ENCODE measurements at regions of chr2 and their contacts with region 1.

Region 1: GRCh38 chr2:226835796-226836547 is at the start of gene RHBDD1:
- DNase-seq: peak; percentile 93
- ATAC-seq: peak; percentile 86
- H3K4me3 Mint-ChIP-seq: peak within 1 kb of the TSS; percentile 90
- H3K27ac Mint-ChIP-seq: peak within 1 kb of the TSS; percentile 97
- H3K4me1 Mint-ChIP-seq: peaks cover 69% of the 10 kb centered on the region
- H3K27me3 Mint-ChIP-seq: no peaks in the 10 kb centered on the region
- CTCF ChIP-seq: no peak
- total RNA-seq, gene RHBDD1: 71.1 and 90.2 TPM in 2 replicates

Region 2: DNA sequence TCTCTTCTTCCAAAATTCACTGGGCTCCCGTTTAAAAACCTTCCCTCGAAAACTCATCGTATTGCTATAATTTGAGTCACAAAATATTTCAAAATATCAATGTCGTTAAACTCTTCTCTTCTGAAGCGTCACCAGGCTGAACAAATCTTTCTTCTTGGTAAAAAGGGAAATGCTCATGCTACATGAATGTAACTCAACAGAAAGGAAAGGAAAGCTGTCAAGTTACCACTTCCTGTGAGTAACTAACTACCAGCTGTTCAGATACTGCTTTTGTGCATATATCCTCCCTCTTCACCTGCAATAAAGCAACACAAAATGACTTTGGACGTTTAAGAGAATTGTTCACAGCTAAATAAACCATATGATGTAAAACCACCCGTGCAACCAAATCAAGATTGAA is 1889.1 kb before region 1 on chr2:
- CTCF ChIA-PET with region 1: no interaction called
- POLR2A ChIA-PET with region 1: no interaction called
- intact Hi-C with region 1: loop called (anchors 10 kb)
- DNase-seq: no peak
- ATAC-seq: peak; percentile 65
- H3K4me3 Mint-ChIP-seq: peak overlapping the region; percentile 90
- H3K27ac Mint-ChIP-seq: peak overlapping the region; percentile 92
- H3K4me1 Mint-ChIP-seq: peaks cover 87% of the 10 kb centered on the region
- H3K27me3 Mint-ChIP-seq: no peaks in the 10 kb centered on the region
- CTCF ChIP-seq: no peak

Region 3: DNA sequence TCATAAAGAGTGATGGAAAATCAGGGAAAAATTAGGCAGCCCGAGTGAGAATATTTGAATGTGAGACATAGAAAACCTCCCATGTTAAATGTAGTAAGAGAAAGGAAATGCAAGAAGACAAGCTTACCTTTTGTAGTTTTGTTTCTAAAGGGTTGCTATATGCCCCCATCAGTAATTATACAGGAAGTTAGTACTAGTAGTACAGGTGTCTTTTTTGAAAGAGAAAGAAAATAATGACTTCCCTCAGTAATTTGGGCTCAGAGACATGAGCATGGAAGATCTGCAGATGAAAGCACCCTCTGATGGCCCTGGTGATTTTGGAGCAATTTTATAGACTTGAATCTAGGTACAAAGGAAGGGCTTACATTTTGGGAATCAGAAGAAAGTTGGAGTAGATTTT is 80.7 kb after region 1 on chr2:
- CTCF ChIA-PET with region 1: no interaction called
- POLR2A ChIA-PET with region 1: interaction called, 10 read pairs
- intact Hi-C with region 1: no loop called
- DNase-seq: no peak
- ATAC-seq: peak; percentile 57
- H3K4me3 Mint-ChIP-seq: peak overlapping the region; percentile 52
- H3K27ac Mint-ChIP-seq: peak overlapping the region; percentile 89
- H3K4me1 Mint-ChIP-seq: peaks cover 59% of the 10 kb centered on the region
- H3K27me3 Mint-ChIP-seq: no peaks in the 10 kb centered on the region
- CTCF ChIP-seq: no peak

Region 4: DNA sequence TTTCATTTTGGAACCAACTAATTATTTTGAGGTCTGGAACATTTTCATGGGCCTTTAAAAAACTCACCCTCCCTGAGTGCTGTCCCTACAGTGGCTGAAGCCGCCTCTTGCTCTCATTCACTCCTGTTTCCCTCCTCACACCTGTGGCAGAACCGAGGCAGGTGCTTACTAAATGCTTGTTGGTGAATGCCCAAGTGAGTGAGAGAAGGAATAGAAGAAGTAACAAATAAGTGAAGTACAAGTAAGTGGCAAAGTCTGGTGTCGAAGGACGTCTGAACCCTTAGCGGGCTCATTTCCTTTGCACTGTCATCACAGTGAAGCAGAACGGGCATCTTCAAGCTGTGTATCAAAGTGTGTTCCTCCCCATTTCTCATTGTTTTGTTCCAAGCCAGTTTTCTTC is 135.1 kb after region 1 on chr2:
- CTCF ChIA-PET with region 1: no interaction called
- POLR2A ChIA-PET with region 1: interaction called, 17 read pairs
- intact Hi-C with region 1: loop called (anchors 1 kb)
- DNase-seq: no peak
- ATAC-seq: peak; percentile 77
- H3K4me3 Mint-ChIP-seq: peak overlapping the region; percentile 84
- H3K27ac Mint-ChIP-seq: peak overlapping the region; percentile 97
- H3K4me1 Mint-ChIP-seq: peaks cover 42% of the 10 kb centered on the region
- H3K27me3 Mint-ChIP-seq: no peaks in the 10 kb centered on the region
- CTCF ChIP-seq: no peak

Region 5: DNA sequence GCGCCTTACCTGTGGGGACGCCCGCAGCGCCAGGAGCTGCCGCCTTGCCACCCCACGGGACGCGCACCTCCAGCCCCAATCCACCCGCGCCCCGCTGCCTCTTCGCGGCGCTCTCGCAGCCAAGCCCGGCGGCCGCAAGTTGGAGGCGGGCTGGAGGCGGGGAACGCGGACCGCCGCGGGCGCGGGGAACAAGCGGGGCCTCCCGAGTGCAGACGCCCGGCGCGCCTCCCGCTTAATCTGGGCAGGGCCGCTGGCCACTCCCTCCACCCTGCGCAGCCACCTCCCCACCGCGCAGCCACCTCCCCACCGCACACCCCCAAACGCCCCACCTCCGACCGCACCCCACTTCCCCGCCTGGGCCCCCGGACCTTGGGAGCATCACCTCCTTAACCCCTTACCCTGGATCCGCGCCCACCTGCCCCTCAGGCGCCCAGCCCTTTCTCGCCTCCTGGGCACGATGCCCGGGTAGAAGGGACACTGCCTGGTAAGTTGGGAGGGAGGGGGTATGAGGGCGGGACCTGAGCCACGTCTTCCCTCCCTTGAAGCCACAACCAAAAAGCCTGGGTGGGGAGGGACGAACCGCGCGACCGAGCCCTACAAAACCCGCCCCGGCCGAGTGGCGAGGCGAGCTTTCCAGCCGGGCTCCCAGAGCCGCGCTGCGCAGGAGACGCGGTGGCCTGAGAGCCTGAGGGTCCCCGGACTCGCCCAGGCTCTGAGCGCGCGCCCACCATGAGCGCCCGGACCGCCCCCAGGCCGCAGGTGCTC is 328.2 kb after region 1 on chr2 and contains the starts of genes COL4A3 and COL4A4:
- CTCF ChIA-PET with region 1: no interaction called
- POLR2A ChIA-PET with region 1: no interaction called
- intact Hi-C with region 1: loop called (anchors 1 kb)
- DNase-seq: peak; percentile 54
- ATAC-seq: peak; percentile 78
- H3K4me3 Mint-ChIP-seq: peak within 1 kb of the TSS; percentile 87
- H3K27ac Mint-ChIP-seq: peak within 1 kb of the TSS; percentile 89
- H3K4me1 Mint-ChIP-seq: peaks cover 44% of the 10 kb centered on the region
- H3K27me3 Mint-ChIP-seq: peaks cover 5% of the 10 kb centered on the region
- CTCF ChIP-seq: no peak
- total RNA-seq, gene COL4A3: 15.5 and 18.3 TPM in 2 replicates
- total RNA-seq, gene COL4A4: 9.3 and 10.9 TPM in 2 replicates

Region 6: GRCh38 chr2:227324995-227325838 is 489.2 kb after region 1 on chr2 and contains the start of gene MFF:
- CTCF ChIA-PET with region 1: no interaction called
- POLR2A ChIA-PET with region 1: no interaction called
- intact Hi-C with region 1: loop called (anchors 2 kb)
- DNase-seq: peak; percentile 87
- ATAC-seq: peak; percentile 98
- H3K4me3 Mint-ChIP-seq: peak within 1 kb of the TSS; percentile 95
- H3K27ac Mint-ChIP-seq: peak within 1 kb of the TSS; percentile 91
- H3K4me1 Mint-ChIP-seq: peaks cover 33% of the 10 kb centered on the region
- H3K27me3 Mint-ChIP-seq: no peaks in the 10 kb centered on the region
- CTCF ChIP-seq: no peak
- total RNA-seq, gene MFF: 66.4 and 78.9 TPM in 2 replicates

Region 7: GRCh38 chr2:227471924-227472264 is 635.9 kb after region 1 on chr2 and contains the start of gene AGFG1:
- CTCF ChIA-PET with region 1: no interaction called
- POLR2A ChIA-PET with region 1: no interaction called
- intact Hi-C with region 1: loop called (anchors 5 kb)
- DNase-seq: peak; percentile 89
- ATAC-seq: peak; percentile 87
- H3K4me3 Mint-ChIP-seq: peak within 1 kb of the TSS; percentile 90
- H3K27ac Mint-ChIP-seq: peak within 1 kb of the TSS; percentile 78
- H3K4me1 Mint-ChIP-seq: peaks cover 36% of the 10 kb centered on the region
- H3K27me3 Mint-ChIP-seq: no peaks in the 10 kb centered on the region
- CTCF ChIP-seq: peak; percentile 77
- total RNA-seq, gene AGFG1: 108 and 125 TPM in 2 replicates